ENCODE measurements at regions of chr16 and their contacts with region 1.

Region 1: DNA sequence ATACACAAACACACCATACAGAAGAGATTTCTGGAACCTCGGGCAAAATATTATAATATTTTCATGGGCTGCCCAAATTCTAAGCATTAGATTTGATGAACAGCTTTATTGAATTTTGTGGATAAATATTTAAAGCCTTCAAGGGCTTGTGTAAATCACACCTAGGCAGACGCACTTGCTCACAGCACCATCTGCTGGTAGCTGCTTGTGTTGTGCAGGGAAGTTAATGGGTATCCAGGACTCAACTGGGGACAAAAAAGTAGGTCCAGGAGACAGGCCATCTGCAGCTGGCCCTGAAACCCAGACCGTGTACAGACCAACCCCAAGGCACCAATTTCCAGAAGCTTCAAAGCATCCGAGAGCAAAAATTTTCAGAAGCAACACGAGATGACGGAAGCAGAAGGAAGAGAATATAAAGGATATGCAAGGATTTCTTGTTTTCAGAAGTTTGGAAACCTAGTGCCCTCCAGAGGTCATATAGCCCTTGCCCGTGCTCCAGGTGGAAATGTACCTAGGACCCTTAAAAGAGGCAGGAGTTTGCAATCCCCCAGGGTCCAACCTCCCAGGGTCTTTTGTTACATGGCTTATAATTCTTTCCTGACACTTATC is 140.0 kb downstream of the CHD9NB start:
- DNase-seq: peak; percentile 33 to 82
- H3K4me3 ChIP-seq: no peak overlapping the region
- H3K27ac ChIP-seq: no peak overlapping the region
- H3K4me1 ChIP-seq: no peaks in the 10 kb centered on the region; a peak in 1 of 7 replicates
- H3K27me3 ChIP-seq: no peaks in the 10 kb centered on the region
- CTCF ChIP-seq: peak; percentile 72 to 89 (median 88)
- EP300 ChIP-seq: no peak
- POLR2A ChIP-seq: no peak
- RAD21 ChIP-seq: peak; percentile 89 to 91

Region 2: GRCh38 chr16:52191531-52192134 is 721.0 kb before region 1 on chr16:
- CTCF ChIA-PET with region 1: interaction called, 41 read pairs
- POLR2A ChIA-PET with region 1: no interaction called
- DNase-seq: peak; percentile 33 to 84
- H3K4me3 ChIP-seq: no peak overlapping the region
- H3K27ac ChIP-seq: no peak overlapping the region
- H3K4me1 ChIP-seq: peaks cover 0 to 3% (median 0%) of the 10 kb centered on the region in 4 experiments; a peak in 1 of 7 replicates
- H3K27me3 ChIP-seq: no peaks in the 10 kb centered on the region
- CTCF ChIP-seq: peak; percentile 71 to 92 (median 85)
- EP300 ChIP-seq: no peak
- POLR2A ChIP-seq: no peak
- RAD21 ChIP-seq: peak; percentile 96 to 98

Region 3: DNA sequence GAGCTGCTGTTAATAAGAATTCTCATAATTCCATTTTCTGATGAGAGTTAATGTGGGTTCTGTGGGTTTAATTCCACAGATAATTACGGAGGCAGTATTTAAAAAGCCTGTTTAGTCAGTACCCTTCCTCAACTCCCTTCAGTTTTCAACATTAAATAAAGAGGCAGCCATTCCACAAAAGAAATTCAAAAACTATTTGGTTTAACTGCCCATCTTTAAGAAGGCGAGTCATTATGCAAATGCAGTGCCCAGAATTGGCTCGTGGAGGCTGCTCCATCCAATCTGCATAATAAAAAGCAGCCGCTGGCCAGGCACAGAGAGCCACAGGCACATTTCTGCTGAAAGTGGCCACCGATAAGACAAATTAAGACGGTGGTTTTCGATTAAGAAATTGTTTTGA is 171.3 kb before region 1 on chr16:
- CTCF ChIA-PET with region 1: interaction called, 10 read pairs
- POLR2A ChIA-PET with region 1: no interaction called
- DNase-seq: peak in 1 of 2 experiments; percentile 39
- H3K4me3 ChIP-seq: peak overlapping the region in 3 of 4 experiments; percentile 2 to 41 (median 15); a peak in 3 of 8 replicates
- H3K27ac ChIP-seq: no peak overlapping the region
- H3K4me1 ChIP-seq: peaks cover 4 to 12% (median 8%) of the 10 kb centered on the region in 4 experiments; a peak in 5 of 7 replicates
- H3K27me3 ChIP-seq: no peaks in the 10 kb centered on the region
- CTCF ChIP-seq: no peak
- EP300 ChIP-seq: no peak
- POLR2A ChIP-seq: no peak
- RAD21 ChIP-seq: no peak

Region 4: DNA sequence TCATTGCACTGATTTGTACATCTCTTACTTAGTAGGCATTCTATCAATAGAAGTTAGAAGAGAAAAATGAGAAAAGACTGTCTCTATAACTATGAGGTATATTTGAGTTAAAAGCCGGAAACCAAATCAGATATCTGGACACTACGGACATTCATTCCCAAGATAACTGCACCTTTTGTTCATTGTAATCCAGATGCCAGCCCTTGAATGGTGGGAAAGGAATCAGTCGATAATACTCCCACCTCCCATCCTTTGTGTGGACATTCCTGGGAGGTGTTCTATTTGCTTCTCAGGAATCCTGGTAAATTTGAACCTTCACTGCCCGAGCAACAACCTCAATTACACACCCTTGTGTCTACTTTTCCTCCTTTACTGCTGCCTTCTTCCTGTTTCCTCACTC is 85.2 kb before region 1 on chr16:
- CTCF ChIA-PET with region 1: no interaction called
- POLR2A ChIA-PET with region 1: no interaction called
- DNase-seq: no peak
- H3K4me3 ChIP-seq: no peak overlapping the region
- H3K27ac ChIP-seq: no peak overlapping the region
- H3K4me1 ChIP-seq: no peaks in the 10 kb centered on the region
- H3K27me3 ChIP-seq: peaks cover 0 to 1% (median 0%) of the 10 kb centered on the region in 4 experiments; a peak in 1 of 7 replicates
- CTCF ChIP-seq: no peak
- EP300 ChIP-seq: no peak
- POLR2A ChIP-seq: no peak
- RAD21 ChIP-seq: no peak

Region 5: DNA sequence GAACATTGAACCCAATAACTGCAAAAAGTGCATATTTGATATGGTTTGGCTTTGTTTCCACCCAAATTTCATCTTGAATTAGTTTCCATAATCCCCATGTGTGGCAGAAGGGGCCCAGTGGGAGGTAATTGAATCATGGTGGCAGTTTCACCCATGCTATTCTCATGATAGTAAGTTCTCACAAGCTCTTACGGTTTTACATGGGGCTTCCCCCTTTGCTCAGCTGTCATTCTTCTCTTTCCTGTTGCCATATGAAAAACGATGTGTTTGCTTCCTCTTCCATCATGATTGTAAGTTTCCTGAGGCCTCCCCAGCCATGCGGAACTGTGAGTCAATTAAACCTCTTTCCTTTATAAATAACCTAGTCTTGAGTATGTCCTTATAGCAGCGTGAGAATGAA is 12.5 kb after region 1 on chr16:
- CTCF ChIA-PET with region 1: interaction called, 35 read pairs
- POLR2A ChIA-PET with region 1: no interaction called
- DNase-seq: no peak
- H3K4me3 ChIP-seq: no peak overlapping the region
- H3K27ac ChIP-seq: no peak overlapping the region
- H3K4me1 ChIP-seq: no peaks in the 10 kb centered on the region
- H3K27me3 ChIP-seq: no peaks in the 10 kb centered on the region
- CTCF ChIP-seq: no peak
- EP300 ChIP-seq: no peak
- POLR2A ChIP-seq: no peak
- RAD21 ChIP-seq: no peak

Measured in H1 (cell line).